Sigmoid colon (tissue), 7 donors: ENCODE measurements at regions of chr12 and their contacts with region 1.

Region 1: DNA sequence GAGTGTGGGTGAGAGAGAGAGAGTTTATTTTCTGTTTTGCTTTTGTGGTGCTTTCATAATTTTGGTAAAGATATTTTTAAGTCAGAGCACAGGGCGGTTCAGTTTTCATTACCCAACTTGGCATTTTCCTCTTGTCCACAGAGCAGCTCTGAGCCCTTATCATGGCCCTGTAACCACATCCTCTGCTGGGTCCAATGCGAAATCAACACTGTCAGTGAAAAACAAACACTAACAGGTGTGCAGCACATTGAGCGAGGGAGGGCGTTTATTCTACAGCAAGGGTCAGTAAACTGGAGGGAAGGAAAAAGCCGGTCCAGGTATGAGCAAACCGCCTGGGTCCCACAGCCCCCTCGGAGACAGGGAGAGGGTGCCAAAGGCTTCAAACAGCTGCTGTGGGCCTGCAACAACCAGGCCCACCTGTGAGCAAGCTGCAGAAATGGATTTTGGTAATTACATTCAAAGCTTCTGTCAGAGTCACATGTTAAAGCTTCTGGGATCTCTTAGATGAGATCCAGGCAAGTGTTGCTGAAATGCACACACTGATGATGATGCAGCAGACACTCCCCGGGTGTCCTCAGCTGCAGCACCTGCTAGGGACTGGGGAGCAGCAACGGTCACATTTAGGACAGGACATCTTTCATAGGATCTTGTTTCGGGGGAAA is 132.7 kb upstream of the DYRK2 start:
- DNase-seq: no peak
- H3K4me3 ChIP-seq: no peak overlapping the region
- H3K27ac ChIP-seq: peak overlapping the region in 1 of 4 donors; percentile 71
- H3K4me1 ChIP-seq: peaks cover 0 to 23% (median 12%) of the 10 kb centered on the region in 4 donors
- H3K27me3 ChIP-seq: no peaks in the 10 kb centered on the region
- CTCF ChIP-seq: no peak
- EP300 ChIP-seq: no peak
- POLR2A ChIP-seq: no peak

Region 2: GRCh38 chr12:67482751-67483671 is 32.8 kb before region 1 on chr12:
- intact Hi-C with region 1: loop called (anchors 5 kb)
- DNase-seq: peak; percentile 91
- H3K4me3 ChIP-seq: no peak overlapping the region
- H3K27ac ChIP-seq: peak overlapping the region in 2 of 4 donors; percentile 49 to 52
- H3K4me1 ChIP-seq: peaks cover 0 to 18% (median 15%) of the 10 kb centered on the region in 4 donors
- H3K27me3 ChIP-seq: no peaks in the 10 kb centered on the region
- CTCF ChIP-seq: no peak
- EP300 ChIP-seq: no peak
- POLR2A ChIP-seq: no peak